HEK293 (cell line): ENCODE measurements at regions of chr6 and their contacts with region 1.

Region 1: DNA sequence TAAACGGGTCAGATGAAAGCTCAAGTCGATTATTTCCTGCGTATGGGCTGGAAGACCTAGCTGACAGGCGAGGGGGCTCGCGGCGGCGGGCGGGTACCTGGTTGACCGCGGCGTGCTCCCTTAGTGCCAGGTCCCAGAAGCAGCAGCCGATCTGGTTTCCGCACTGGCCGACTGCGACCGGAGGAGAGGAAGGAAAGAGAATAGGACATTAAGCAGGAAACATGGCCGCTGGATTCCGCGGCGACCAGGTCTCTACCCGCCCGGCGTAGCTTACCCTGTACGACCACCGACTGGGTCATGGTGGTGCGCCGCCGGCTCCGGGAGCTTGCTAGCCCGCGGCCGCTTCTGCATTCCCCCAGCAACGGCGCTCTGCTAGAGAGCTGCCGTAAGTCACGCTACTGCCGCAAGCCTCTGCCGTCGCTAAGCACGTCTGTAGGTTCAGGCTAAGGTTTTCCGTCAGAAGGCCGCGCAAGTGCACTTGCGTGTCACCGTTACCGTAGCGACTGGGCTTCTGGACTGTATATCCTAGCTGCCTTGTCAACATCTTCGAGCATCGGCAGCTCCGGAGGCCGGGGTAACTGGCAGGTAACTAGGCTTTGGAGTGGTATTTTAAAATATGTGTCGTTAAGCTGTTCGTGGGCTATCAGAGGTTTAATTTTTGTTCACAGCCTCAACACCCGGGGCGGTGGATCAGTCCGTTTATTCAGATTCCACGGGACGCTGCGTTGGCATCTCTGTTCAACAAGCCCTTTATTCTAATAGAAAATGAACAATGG is at the starts of genes FAM229B and TUBE1:
- H3K4me3 ChIP-seq: peak within 1 kb of the TSS; percentile 83
- H3K27ac ChIP-seq: peak within 1 kb of the TSS; percentile 76
- H3K4me1 ChIP-seq: peaks cover 4% of the 10 kb centered on the region; the same call in 1 of the 2 replicates
- CTCF ChIP-seq: peak; percentile 50; the same call in 1 of the 2 replicates

Region 2: GRCh38 chr6:112100561-112100960 is 13.2 kb after region 1 on chr6:
- CTCF ChIA-PET with region 1: interaction called, 25 read pairs
- POLR2A ChIA-PET with region 1: interaction called, 4 read pairs
- H3K4me3 ChIP-seq: no peak overlapping the region
- H3K27ac ChIP-seq: no peak overlapping the region
- H3K4me1 ChIP-seq: no peaks in the 10 kb centered on the region
- CTCF ChIP-seq: no peak

Region 3: DNA sequence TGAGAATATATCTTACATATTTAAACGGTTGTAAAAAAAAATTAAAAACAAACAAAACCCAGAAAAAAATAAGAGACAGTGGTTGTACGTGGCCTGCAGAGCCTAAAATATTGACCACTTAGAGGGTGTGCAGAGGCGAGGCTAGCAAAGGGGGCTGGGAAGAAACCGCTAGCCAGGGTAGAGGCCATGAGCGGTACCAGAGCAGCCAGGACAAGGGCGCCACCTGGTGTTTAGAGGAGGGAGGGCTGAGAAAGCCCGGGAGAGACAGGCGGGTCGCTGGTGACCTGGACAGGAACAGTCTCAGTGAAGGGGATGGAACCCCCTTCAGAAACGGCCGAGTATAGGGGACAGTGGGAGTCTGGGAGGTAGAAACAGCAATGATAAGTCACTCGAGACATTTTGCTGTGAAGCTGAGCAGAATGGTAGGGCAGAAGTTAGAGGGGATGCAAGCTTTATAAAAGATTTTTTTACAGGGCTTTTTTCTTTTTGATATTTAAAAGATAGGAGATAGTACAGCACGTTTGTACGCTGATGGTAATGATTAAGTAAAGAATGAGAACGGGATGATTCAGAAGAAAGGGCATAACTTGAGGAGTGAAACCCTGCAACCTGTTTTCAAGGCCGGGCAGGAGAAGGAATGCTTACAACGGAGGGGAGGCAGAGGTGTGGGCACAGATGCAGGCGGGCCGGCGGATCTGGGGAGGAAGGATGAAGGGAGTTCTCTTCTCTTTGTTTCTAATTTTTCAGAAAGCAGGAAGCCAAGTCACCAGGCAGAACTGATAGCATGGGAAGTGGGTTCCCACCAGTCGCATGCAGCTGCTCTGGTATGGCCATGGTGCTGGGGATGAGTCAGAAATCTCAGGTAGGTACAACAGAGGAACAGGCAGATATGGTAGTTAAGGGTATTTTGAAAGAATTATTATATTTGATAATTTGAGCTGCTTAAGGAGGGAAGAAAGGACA is 76.3 kb after region 1 on chr6:
- CTCF ChIA-PET with region 1: interaction called, 32 read pairs
- POLR2A ChIA-PET with region 1: interaction called, 4 read pairs
- H3K4me3 ChIP-seq: no peak overlapping the region
- H3K27ac ChIP-seq: no peak overlapping the region
- H3K4me1 ChIP-seq: no peaks in the 10 kb centered on the region
- CTCF ChIP-seq: peak; percentile 36; the same call in 1 of the 2 replicates

Region 4: DNA sequence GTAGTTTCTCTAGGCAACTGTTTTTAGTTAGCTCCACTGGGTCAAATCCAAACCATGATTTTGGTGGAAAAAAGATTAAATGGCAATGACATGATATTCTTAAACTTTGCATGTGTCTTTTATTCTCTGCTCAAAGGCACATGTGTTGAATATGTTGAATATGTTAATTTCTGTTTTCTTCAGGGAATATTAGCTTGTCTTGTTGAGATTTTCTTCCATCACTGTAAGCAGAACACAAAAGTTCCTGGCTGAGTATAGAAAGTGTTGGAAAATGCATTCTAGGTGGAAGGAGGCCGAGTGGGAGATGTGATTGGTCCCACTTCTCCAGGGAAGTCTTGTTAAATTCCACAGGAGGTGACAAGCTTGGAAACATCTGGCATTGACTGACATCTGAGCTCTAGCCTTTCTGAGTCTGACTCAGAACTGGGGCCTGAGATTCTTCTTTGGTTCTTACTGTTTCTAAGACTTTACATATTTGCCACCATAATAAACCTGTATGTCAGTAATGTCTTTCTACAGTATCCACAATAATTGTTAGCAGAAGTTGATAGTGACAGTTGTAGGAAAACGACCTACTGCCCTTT is 86.0 kb after region 1 on chr6:
- CTCF ChIA-PET with region 1: interaction called, 11 read pairs
- POLR2A ChIA-PET with region 1: interaction called, 8 read pairs
- H3K4me3 ChIP-seq: no peak overlapping the region
- H3K27ac ChIP-seq: no peak overlapping the region
- H3K4me1 ChIP-seq: peaks cover 9% of the 10 kb centered on the region
- CTCF ChIP-seq: no peak

Region 5: DNA sequence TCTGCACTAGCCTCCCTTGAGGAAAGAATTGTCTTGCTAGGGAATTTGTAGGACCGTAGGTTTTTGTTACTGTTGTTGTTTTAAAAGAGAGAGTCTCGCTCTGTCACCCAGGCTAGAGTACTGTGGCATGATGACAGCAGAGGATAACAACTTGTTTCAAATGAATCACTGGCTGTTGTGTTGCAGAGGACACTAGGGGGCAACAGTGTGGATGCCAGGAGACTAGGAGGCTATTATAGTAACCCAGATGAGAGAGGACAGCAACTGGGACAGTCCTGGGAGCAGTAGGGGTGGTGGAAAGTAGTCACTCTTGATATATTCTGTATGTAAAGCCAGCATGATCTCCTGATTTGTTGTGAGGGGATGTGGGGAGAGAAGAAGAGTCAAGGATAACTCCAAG is 208.8 kb after region 1 on chr6:
- CTCF ChIA-PET with region 1: no interaction called
- POLR2A ChIA-PET with region 1: no interaction called
- H3K4me3 ChIP-seq: no peak overlapping the region
- H3K27ac ChIP-seq: no peak overlapping the region
- H3K4me1 ChIP-seq: peaks cover 7% of the 10 kb centered on the region; the same call in 1 of the 2 replicates
- CTCF ChIP-seq: peak; percentile 61; the same call in 1 of the 2 replicates